Activated T-helper 1 cell treated with anti-CD3 and anti-CD28 coated beads, Interleukin-12 subunit alpha, Interleukin-12 subunit beta, Interleukin-2, Interleukin-4 antibody, amounts not matched to agents 30 ng/mL and 10 ng/mL and 1 ng/mL, durations not matched to agents 14 hours and 24 hours and 36 hours (primary cell): ENCODE measurements at regions of chr2 and their contacts with region 1.

Region 1: DNA sequence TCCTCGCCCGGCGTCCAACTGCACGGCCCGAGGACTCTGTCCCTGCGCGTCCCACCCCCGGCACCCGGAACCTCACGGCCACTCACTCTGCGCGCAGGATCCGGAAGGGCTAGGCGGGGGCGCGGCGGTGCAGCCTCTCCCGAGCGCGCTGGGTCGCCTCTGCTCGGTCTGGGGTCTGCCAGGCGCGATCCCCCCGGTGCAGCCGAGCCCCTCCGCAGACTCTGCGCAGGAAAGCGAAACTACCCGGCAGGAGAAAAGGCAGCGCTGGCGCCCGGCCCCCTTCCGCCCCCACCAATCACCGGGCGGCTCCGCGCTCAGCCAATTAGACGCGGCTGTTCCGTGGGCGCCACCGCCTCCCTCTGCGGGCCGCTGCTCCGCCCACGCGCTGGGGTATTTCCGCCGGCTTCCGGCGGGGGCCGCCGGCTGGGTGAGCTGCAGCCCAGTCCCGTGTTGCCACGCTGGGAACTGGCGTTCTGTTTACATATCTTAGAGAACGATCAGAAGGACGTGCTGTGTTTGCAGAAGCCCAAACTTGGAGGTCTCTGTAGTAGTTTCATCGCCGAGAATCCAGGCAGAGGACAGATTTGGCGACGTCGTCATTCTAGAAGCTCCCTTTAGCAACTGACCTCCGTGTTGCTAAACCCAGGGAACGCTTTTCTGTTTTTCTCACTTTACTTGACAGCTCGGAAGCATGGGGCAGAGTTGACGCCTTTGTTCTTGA is at the start of gene STAT1:
- DNase-seq: peak; percentile 97
- H3K4me3 Mint-ChIP-seq: no peak within 1 kb of the TSS
- H3K27ac Mint-ChIP-seq: no peak within 1 kb of the TSS
- H3K4me1 Mint-ChIP-seq: peaks cover 49% of the 10 kb centered on the region
- H3K27me3 Mint-ChIP-seq: no peaks in the 10 kb centered on the region
- total RNA-seq, gene STAT1: 129 and 136 TPM in 2 replicates

Region 2: DNA sequence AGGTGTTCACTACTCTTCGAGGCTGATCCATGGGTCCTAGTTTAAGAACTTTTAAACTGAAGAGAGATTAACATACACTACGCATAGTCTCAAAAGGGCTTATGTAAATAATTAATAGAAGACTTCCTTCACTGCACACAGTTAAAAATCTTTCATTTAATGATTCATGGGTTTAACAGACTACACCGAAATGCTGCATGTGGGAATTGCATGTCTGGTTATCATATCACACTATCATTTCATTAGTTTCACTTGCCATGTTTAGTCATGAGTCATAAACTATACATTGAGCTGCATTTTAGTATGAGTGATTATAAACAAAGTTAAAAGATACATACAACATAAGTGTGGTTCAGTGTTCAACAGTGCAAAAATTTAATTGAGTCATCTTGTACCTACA is 102.3 kb before region 1 on chr2:
- intact Hi-C with region 1: loop called (anchors 5 kb)
- DNase-seq: no peak
- H3K4me3 Mint-ChIP-seq: no peak overlapping the region
- H3K27ac Mint-ChIP-seq: peak overlapping the region; percentile 76
- H3K4me1 Mint-ChIP-seq: peaks cover 29% of the 10 kb centered on the region
- H3K27me3 Mint-ChIP-seq: no peaks in the 10 kb centered on the region

Region 3: DNA sequence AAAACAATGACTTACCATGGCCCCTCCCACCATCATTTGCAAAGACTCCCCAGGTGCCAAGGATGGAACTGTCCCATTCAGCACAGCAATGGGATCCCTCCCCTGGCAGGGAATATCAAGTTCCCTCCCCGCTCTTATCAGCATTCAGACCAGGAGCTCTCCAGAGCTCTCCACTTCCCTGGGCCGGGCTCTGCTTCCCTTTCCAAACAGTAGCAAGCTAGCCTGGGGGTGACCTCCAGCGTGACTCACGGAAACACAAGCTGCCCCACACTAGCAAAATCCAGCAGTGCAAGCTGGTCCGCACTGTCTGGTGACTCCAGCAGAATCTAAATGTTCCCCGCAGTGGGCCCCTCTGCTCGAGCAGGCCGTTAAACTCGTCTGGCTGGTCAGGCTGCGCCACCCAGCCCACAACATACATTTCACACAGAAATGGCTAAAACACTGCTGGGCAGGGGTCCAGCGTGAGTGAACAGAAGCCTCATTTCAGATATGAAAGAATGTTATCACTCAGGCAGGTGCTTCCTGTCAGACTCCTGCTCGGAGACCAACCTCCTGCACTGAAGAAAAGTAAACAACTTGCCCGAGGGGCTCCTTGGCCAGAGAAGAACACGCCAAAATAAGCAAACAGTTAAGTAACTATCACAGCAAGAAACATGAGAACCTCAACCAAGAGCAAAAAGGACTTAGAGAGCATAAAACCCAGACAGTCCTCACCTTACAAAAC is 34.0 kb before region 1 on chr2:
- intact Hi-C with region 1: loop called (anchors 2 kb)
- DNase-seq: no peak
- H3K4me3 Mint-ChIP-seq: no peak overlapping the region
- H3K27ac Mint-ChIP-seq: peak overlapping the region; percentile 86
- H3K4me1 Mint-ChIP-seq: peaks cover 71% of the 10 kb centered on the region
- H3K27me3 Mint-ChIP-seq: no peaks in the 10 kb centered on the region

Region 4: GRCh38 chr2:190996338-190996946 is 17.6 kb before region 1 on chr2:
- intact Hi-C with region 1: loop called (anchors 1 kb)
- DNase-seq: no peak
- H3K4me3 Mint-ChIP-seq: no peak overlapping the region
- H3K27ac Mint-ChIP-seq: peak overlapping the region; percentile 87
- H3K4me1 Mint-ChIP-seq: peaks cover 71% of the 10 kb centered on the region
- H3K27me3 Mint-ChIP-seq: no peaks in the 10 kb centered on the region

Region 5: GRCh38 chr2:191030521-191031154 is 16.5 kb after region 1 on chr2:
- intact Hi-C with region 1: loop called (anchors 1 kb)
- DNase-seq: peak; percentile 31
- H3K4me3 Mint-ChIP-seq: no peak overlapping the region
- H3K27ac Mint-ChIP-seq: peak overlapping the region; percentile 42
- H3K4me1 Mint-ChIP-seq: peaks cover 70% of the 10 kb centered on the region
- H3K27me3 Mint-ChIP-seq: no peaks in the 10 kb centered on the region